PC-3 (cell line): ENCODE measurements at regions of chr11 and their contacts with region 1.

Region 1: DNA sequence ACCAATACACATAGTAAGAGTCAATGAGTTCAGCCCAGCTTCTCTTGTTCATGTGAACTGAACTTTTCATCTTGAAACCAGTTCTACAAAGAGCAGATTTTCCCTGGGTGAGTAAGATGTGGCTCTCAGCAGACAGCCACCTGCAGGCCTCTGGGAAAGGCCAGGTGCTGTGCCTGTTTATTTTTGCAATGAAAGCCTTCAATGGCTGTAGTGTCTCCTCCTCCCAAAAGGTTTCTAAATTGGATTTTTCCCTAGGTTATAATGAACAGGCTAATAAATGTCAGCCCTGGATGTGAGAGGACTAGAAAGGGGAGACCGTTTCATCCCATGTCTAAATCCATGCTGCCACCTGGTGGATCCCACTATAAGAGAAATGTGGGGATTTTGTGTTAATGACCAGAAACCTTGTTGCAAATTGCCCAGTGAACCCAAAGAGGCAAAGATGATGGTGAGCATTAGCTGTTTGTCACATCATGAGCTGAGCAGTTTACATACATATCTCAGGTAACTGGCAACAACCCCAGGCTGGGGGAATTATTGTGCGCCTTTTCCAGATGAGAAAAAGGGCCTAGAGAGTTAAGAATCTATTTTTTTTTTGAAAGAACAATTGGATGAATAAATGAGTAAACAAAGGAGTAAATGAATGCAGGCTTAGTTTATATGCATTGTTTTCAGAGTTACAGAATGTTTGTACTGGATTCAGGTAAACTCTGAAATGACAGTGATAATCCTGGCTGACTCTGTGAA is 12.7 kb downstream of the C11orf91 start:
- DNase-seq: peak; percentile 82
- ATAC-seq: no peak
- H3K4me3 ChIP-seq: no peak overlapping the region
- H3K27ac ChIP-seq: peak overlapping the region; percentile 100
- H3K4me1 ChIP-seq: peaks cover 51% of the 10 kb centered on the region
- H3K27me3 ChIP-seq: no peaks in the 10 kb centered on the region
- CTCF ChIP-seq: peak; percentile 97

Region 2: GRCh38 chr11:33161120-33162005 is 526.5 kb before region 1 on chr11 and contains the start of gene CSTF3:
- CTCF ChIA-PET with region 1: no interaction called
- POLR2A ChIA-PET with region 1: no interaction called
- intact Hi-C with region 1: loop called (anchors 1 kb)
- DNase-seq: peak; percentile 99
- ATAC-seq: peak; percentile 94
- H3K4me3 ChIP-seq: peak within 1 kb of the TSS; percentile 96
- H3K27ac ChIP-seq: peak within 1 kb of the TSS; percentile 77
- H3K4me1 ChIP-seq: peaks cover 27% of the 10 kb centered on the region
- H3K27me3 ChIP-seq: no peaks in the 10 kb centered on the region
- CTCF ChIP-seq: no peak
- total RNA-seq, gene CSTF3: 18.5 and 30.0 TPM in 2 replicates

Region 3: GRCh38 chr11:33452836-33453624 is 234.9 kb before region 1 on chr11:
- CTCF ChIA-PET with region 1: no interaction called
- POLR2A ChIA-PET with region 1: interaction called, 3 read pairs
- intact Hi-C with region 1: loop called (anchors 5 kb)
- DNase-seq: peak; percentile 90
- ATAC-seq: peak; percentile 72
- H3K4me3 ChIP-seq: no peak overlapping the region
- H3K27ac ChIP-seq: peak overlapping the region; percentile 86
- H3K4me1 ChIP-seq: peaks cover 53% of the 10 kb centered on the region
- H3K27me3 ChIP-seq: no peaks in the 10 kb centered on the region
- CTCF ChIP-seq: no peak

Region 4: DNA sequence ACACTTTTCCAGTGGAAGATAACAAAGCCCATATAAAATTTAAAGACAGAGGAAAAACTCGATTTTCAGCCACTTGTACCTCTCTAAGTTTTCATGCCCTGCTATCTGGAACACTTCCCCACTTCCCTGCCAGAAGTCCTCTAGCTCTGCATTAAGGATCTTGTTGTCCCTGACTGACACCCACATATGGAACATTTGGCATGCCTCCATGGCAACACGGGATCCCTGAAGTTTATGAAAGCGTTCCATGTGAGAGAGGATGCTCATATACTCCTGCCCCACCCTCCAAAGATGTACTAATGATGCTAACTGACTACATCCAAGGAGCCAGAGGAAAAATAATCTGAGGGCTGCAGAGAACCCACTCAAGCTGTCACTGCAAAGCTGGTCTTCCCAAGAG is 21.6 kb after region 1 on chr11:
- CTCF ChIA-PET with region 1: no interaction called
- POLR2A ChIA-PET with region 1: interaction called, 7 read pairs
- intact Hi-C with region 1: loop called (anchors 2 kb)
- DNase-seq: no peak
- ATAC-seq: no peak
- H3K4me3 ChIP-seq: no peak overlapping the region
- H3K27ac ChIP-seq: peak overlapping the region; percentile 99
- H3K4me1 ChIP-seq: peaks cover 61% of the 10 kb centered on the region
- H3K27me3 ChIP-seq: no peaks in the 10 kb centered on the region
- CTCF ChIP-seq: no peak

Region 5: GRCh38 chr11:33736148-33736809 is 48.4 kb after region 1 on chr11 and contains the start of gene CD59:
- CTCF ChIA-PET with region 1: interaction called, 6 read pairs
- POLR2A ChIA-PET with region 1: interaction called, 15 read pairs
- intact Hi-C with region 1: loop called (anchors 1 kb)
- DNase-seq: peak; percentile 94
- ATAC-seq: peak; percentile 81
- H3K4me3 ChIP-seq: peak within 1 kb of the TSS; percentile 85
- H3K27ac ChIP-seq: peak within 1 kb of the TSS; percentile 91
- H3K4me1 ChIP-seq: peaks cover 47% of the 10 kb centered on the region
- H3K27me3 ChIP-seq: no peaks in the 10 kb centered on the region
- CTCF ChIP-seq: no peak
- total RNA-seq, gene CD59: 134 and 170 TPM in 2 replicates

Region 6: GRCh38 chr11:33829433-33830141 is 141.7 kb after region 1 on chr11:
- CTCF ChIA-PET with region 1: no interaction called
- POLR2A ChIA-PET with region 1: no interaction called
- intact Hi-C with region 1: loop called (anchors 2 kb)
- DNase-seq: peak; percentile 83
- ATAC-seq: peak; percentile 70
- H3K4me3 ChIP-seq: peak overlapping the region; percentile 70
- H3K27ac ChIP-seq: no peak overlapping the region
- H3K4me1 ChIP-seq: peaks cover 27% of the 10 kb centered on the region
- H3K27me3 ChIP-seq: no peaks in the 10 kb centered on the region
- CTCF ChIP-seq: peak; percentile 87